ENCODE measurements at regions of chr6 and their contacts with region 1.

Region 1: DNA sequence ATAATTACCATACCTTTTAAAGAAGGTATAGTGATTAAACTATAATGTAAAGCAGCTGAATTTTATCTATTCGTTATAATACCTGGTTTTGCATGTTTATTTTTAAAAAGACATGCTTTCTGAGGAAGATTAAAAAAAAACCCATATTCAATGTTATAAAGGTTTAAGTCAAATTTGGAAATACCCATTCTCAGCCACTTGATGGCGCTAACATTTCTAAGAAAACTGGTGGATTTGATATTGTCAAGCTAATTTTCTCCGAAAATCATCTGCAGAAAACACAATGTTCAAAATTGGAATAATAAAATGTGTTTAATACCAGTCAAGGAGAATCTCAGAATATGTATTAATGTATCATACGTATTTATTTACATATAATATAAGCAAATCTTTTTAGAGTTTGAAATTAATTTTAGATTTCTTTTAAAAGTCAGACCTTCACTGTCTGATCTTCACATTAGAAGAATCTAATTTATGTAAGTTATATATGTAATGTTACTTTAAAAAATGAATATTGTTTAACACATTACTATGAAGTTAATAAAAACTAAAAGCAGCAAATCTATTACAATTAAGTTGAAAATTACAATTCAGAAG is 35.0 kb downstream of the SHPRH start:
- DNase-seq: no peak
- ATAC-seq: no peak

Region 2: GRCh38 chr6:146697921-146698320 is 768.8 kb after region 1 on chr6:
- intact Hi-C with region 1: loop called (anchors 2 kb)
- DNase-seq: no peak
- ATAC-seq: no peak